HEK293 (cell line): ENCODE measurements at regions of chr6 and their contacts with region 1.

Region 1: GRCh38 chr6:25278914-25279747 is at the start of gene CARMIL1:
- H3K4me3 ChIP-seq: peak within 1 kb of the TSS; percentile 83
- H3K27ac ChIP-seq: peak within 1 kb of the TSS; percentile 89
- H3K4me1 ChIP-seq: peaks cover 15% of the 10 kb centered on the region
- CTCF ChIP-seq: peak; percentile 86

Region 2: GRCh38 chr6:25484900-25485299 is 205.8 kb after region 1 on chr6:
- CTCF ChIA-PET with region 1: interaction called, 95 read pairs
- POLR2A ChIA-PET with region 1: interaction called, 24 read pairs
- H3K4me3 ChIP-seq: no peak overlapping the region
- H3K27ac ChIP-seq: no peak overlapping the region
- H3K4me1 ChIP-seq: peaks cover 21% of the 10 kb centered on the region
- CTCF ChIP-seq: no peak

Region 3: DNA sequence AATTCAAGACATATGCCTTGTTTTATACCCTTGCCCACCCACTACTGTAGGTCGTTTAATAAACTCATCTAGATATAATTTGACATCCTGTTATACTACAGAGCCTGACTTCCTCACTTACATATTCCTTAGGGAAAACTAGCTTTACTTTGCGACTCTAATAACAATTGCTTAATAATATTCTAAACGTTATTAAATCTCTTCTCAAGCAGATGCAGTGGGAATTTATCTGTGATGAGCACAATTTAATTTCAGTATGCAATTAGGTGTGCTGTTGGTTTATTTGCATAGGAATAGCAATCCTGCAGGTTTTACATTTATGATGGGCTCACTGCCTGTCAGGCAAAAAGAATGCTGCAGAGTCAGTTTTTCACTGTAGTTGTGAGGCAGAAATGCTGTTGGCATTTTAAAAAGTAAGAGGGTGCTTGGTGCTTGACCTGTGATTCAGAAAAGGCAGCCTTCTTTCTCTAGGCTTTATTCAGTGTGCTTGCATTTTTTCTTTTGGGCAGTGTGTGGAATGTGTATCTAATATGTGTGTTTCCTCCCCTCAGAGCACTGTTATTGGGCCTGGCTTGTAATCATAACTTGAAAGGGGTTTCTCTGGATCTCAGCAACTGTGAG is 220.6 kb after region 1 on chr6:
- CTCF ChIA-PET with region 1: interaction called, 11 read pairs
- POLR2A ChIA-PET with region 1: interaction called, 3 read pairs
- H3K4me3 ChIP-seq: no peak overlapping the region
- H3K27ac ChIP-seq: no peak overlapping the region
- H3K4me1 ChIP-seq: no peaks in the 10 kb centered on the region; the same call in 1 of the 2 replicates
- CTCF ChIP-seq: no peak